Activated CD4-positive, alpha-beta T cell treated with anti-CD3 and anti-CD28 coated beads for 36 hours (primary cell): ENCODE measurements at regions of chr15 and their contacts with region 1.

Region 1: GRCh38 chr15:41465822-41466421 is 27.8 kb upstream of the ITPKA start:
- DNase-seq: peak; percentile 34
- ATAC-seq: peak; percentile 81
- H3K4me3 Mint-ChIP-seq: no peak overlapping the region
- H3K27ac Mint-ChIP-seq: no peak overlapping the region
- H3K4me1 Mint-ChIP-seq: no peaks in the 10 kb centered on the region
- H3K27me3 Mint-ChIP-seq: no peaks in the 10 kb centered on the region

Region 2: GRCh38 chr15:41476416-41477048 is 10.6 kb after region 1 on chr15:
- CTCF ChIA-PET with region 1: interaction called, 20 read pairs
- POLR2A ChIA-PET with region 1: no interaction called
- intact Hi-C with region 1: no loop called
- DNase-seq: no peak
- ATAC-seq: no peak
- H3K4me3 Mint-ChIP-seq: no peak overlapping the region
- H3K27ac Mint-ChIP-seq: peak overlapping the region; percentile 87
- H3K4me1 Mint-ChIP-seq: peaks cover 6% of the 10 kb centered on the region
- H3K27me3 Mint-ChIP-seq: no peaks in the 10 kb centered on the region

Region 3: DNA sequence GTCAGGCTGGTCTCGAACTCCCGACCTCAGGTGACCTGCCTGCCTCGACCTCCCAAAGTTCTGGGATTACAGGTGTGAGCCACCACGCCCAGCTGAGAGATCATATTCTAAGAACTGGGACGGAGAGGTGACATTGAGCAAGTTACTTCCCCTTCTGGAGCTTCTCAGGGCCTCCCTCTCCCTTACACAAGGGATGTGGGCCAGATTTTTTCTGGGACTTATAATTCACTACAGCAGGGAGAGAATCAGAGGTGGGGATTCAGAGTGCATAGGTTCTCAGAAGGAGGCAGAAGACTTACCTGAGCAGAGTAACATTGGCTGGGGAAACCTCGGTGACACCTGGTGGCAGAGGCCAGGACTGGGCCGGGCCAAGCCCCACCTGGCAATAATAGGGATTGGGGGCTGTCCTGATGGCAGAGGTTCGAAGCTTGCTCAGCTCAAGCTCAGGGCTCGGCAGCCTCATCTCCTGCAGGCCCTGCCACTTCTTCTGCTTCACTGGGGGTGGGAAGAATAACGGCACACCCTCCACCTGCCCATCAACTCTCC is 40.9 kb after region 1 on chr15:
- CTCF ChIA-PET with region 1: interaction called, 33 read pairs
- POLR2A ChIA-PET with region 1: no interaction called
- intact Hi-C with region 1: loop called (anchors 1 to 5 kb)
- DNase-seq: no peak
- ATAC-seq: no peak
- H3K4me3 Mint-ChIP-seq: no peak overlapping the region
- H3K27ac Mint-ChIP-seq: no peak overlapping the region
- H3K4me1 Mint-ChIP-seq: peaks cover 7% of the 10 kb centered on the region
- H3K27me3 Mint-ChIP-seq: peaks cover 29% of the 10 kb centered on the region

Region 4: DNA sequence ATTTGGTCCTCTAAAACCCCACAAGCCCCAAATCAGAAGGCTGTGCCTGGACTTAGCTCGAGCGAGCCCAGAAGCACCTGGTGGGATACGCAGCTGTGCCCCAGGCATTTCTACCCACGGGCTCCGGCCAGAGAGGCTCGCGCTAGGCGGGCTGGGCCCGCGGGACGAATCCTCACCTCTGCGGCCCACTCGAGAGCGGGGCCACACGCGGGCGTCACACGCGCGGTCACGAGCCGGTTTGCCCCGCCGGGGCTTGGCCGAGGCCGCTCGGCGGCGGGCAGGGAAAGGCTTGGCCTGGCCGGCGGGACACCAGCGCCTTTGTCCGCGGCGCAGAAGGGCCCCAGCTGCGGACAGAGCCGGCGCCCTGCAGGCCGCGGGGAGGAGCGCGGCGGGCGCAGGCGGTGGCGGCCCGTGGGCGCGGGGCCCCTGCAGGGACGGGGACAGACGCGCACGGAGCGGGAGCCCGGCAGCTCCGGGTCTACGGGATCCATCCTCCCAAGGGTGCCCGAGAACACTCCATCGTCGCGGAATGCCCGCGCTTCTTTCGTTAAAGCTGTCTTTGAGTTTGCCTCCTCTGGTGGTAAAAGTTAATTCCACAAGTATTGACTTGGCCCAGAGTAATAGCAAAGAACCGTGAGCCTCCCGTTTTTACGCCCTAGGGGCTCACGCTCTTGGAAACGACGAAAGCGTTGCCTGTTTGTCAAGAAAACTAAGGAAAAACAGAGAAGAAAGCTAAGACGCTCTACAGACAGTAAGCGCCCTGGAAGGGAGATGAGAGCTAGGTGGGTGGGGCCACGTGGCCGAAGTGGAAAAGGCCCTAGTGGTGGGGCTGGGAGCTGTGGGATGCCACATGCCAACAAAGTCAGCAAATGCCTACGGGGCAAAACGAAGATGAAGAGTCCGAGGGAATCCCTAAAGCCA is 119.5 kb after region 1 on chr15:
- CTCF ChIA-PET with region 1: interaction called, 11 read pairs
- POLR2A ChIA-PET with region 1: no interaction called
- intact Hi-C with region 1: loop called in 1 of 2 experiments (anchors 10 kb)
- DNase-seq: peak; percentile 63
- ATAC-seq: peak; percentile 69
- H3K4me3 Mint-ChIP-seq: peak overlapping the region; percentile 30
- H3K27ac Mint-ChIP-seq: no peak overlapping the region
- H3K4me1 Mint-ChIP-seq: peaks cover 6% of the 10 kb centered on the region
- H3K27me3 Mint-ChIP-seq: peaks cover 30% of the 10 kb centered on the region

Region 5: GRCh38 chr15:41811432-41812195 is 345.7 kb after region 1 on chr15:
- CTCF ChIA-PET with region 1: interaction called, 6 read pairs
- POLR2A ChIA-PET with region 1: no interaction called
- intact Hi-C with region 1: loop called (anchors 1 kb)
- DNase-seq: peak; percentile 84
- ATAC-seq: peak; percentile 98
- H3K4me3 Mint-ChIP-seq: no peak overlapping the region
- H3K27ac Mint-ChIP-seq: no peak overlapping the region
- H3K4me1 Mint-ChIP-seq: no peaks in the 10 kb centered on the region
- H3K27me3 Mint-ChIP-seq: no peaks in the 10 kb centered on the region